ENCODE measurements at regions of chr3 and their contacts with region 1.

Region 1: GRCh38 chr3:72473156-72473555 is 375.1 kb downstream of the SHQ1 start:
- DNase-seq: no peak
- H3K4me3 Mint-ChIP-seq: no peak overlapping the region
- H3K27ac Mint-ChIP-seq: peak overlapping the region; percentile 84
- H3K4me1 Mint-ChIP-seq: peaks cover 47% of the 10 kb centered on the region
- H3K27me3 Mint-ChIP-seq: no peaks in the 10 kb centered on the region

Region 2: DNA sequence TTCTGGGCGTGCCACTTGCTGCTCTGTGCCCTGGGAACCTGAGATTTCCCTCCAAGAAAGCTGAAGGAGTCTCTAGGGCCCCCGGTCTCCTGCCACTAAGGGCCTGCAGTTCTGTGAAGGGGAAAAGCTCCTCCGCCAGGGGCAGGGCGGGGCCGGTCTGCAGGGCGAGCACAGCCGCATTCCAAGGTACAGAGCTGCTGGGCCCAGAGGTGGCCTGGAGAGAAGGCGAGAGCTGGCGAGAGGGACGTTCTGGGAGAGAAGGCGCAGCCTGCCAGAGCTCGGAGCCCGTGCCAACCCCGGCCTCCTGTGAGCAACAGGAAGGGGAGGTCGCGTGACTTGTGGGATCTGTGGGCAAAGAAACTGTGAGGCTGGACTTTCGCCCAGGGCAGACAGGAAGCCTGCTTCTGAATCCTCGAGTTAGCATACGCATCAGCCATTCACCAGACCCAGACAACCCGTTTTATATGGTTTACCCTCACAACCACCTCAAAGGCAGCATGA is 125.3 kb before region 1 on chr3:
- intact Hi-C with region 1: no loop called
- DNase-seq: no peak
- H3K4me3 Mint-ChIP-seq: no peak overlapping the region
- H3K27ac Mint-ChIP-seq: no peak overlapping the region
- H3K4me1 Mint-ChIP-seq: peaks cover 54% of the 10 kb centered on the region
- H3K27me3 Mint-ChIP-seq: no peaks in the 10 kb centered on the region

Region 3: GRCh38 chr3:72458358-72458757 is 14.8 kb before region 1 on chr3:
- intact Hi-C with region 1: loop called (anchors 1 kb)
- DNase-seq: no peak
- H3K4me3 Mint-ChIP-seq: no peak overlapping the region
- H3K27ac Mint-ChIP-seq: no peak overlapping the region
- H3K4me1 Mint-ChIP-seq: peaks cover 28% of the 10 kb centered on the region
- H3K27me3 Mint-ChIP-seq: no peaks in the 10 kb centered on the region

Measured in activated T-helper 2 cell treated with anti-CD3 and anti-CD28 coated beads, Interferon-gamma antibody, Interleukin-2, Interleukin-4, amounts not matched to agents 10 μg/mL and 5 μg/mL and 100 μg/mL, durations not matched to agents 14 hours and 24 hours and 36 hours (primary cell).